ENCODE measurements at regions of chr6 and their contacts with region 1.

Region 1: DNA sequence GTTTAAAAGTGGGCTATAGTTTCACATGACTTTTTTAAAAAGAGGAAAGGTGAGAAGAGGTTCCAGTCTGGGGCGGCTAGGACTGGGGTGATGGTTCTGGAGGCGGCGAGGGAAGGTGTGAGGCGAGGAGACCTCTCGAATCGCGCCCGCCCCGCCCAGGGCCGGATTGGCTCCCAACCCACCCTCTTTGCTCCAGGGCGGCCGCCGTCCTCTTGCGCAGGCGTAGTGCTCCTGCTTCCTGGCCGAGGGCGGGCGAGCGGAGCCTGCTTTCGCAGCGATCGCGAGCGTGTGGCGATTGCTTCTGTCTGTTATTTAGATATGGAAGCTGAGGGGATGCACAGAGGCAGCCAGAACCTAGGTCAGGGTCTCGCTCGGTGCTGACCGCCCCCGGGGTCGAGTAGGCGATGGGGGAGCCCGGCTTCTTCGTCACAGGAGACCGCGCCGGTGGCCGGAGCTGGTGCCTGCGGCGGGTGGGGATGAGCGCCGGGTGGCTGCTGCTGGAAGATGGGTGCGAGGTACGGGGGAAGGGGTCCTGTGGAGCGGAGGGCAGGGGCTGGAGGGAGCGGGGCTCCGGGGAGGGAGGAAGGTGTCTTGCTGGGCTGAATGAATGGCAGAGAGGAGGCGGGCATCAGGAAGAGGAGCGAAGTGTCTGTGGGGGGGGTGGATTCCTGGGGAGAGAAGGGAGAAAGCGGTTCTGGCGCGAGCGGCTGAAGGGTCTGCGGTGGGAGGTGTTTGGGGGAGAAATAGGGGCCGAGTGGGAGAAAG is at the start of gene RNF8:
- DNase-seq: peak; percentile 73 to 83
- ATAC-seq: peak; percentile 89 to 91
- H3K4me3 ChIP-seq: peak within 1 kb of the TSS; percentile 92 to 99 (median 93)
- H3K27ac ChIP-seq: peak within 1 kb of the TSS; percentile 8 to 64 (median 48)
- H3K4me1 ChIP-seq: peaks cover 19 to 22% of the 10 kb centered on the region in 2 donors
- H3K27me3 ChIP-seq: no peaks in the 10 kb centered on the region
- CTCF ChIP-seq: no peak
- POLR2A ChIP-seq: no peak
- total RNA-seq, gene RNF8: 6.9 to 17.8 (median 11.9) TPM

Region 2: DNA sequence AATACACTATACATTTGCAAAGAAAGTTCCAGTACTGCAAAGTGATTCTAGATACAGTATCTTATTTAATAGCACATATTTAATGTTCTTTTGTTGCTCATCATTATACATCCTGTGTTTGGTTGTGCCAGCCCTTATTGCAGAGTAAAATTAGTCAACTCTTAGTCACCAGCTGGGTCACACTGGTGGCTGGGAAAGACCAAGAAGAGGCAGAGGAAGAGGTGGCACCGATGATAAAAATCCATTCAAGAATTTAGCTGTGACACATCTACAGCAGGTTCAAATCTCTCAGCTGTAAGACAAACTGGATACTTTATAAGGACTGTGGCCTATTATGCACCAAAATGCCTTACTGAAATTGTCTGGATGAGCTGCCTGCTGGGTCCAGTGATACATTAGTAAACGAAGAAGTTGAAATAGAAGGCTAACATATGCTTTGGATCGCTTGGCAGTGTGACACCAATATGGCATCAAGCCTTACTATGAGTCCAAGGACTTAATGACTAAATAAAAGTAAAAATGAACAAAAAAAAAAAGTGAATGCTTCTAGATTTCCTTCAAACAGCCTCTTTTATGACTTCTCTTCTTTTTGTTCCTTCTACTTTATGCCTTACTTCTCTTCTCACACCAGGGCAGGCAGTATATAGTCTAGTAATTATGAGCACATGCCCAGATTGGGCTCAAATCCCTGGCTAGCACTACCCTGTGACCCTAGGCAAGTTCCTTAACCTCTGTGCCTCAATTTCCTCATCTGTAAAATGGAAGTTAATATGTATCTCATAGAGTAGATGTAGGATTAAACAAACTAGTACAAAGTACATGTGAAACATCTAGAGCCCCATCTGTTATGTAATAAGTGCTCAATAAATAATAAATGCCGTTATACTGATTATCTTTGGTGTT is 29.6 kb before region 1 on chr6:
- in situ Hi-C with region 1: no loop called
- intact Hi-C with region 1: loop called (anchors 1 kb)
- DNase-seq: no peak
- ATAC-seq: no peak
- H3K4me3 ChIP-seq: no peak overlapping the region
- H3K27ac ChIP-seq: no peak overlapping the region
- H3K4me1 ChIP-seq: no peaks in the 10 kb centered on the region
- H3K27me3 ChIP-seq: no peaks in the 10 kb centered on the region
- CTCF ChIP-seq: no peak
- POLR2A ChIP-seq: no peak

Region 3: GRCh38 chr6:37432916-37433656 is 79.1 kb after region 1 on chr6 and contains the start of gene CMTR1:
- in situ Hi-C with region 1: no loop called
- intact Hi-C with region 1: loop called (anchors 5 kb)
- DNase-seq: peak; percentile 85 to 89
- ATAC-seq: peak; percentile 93 to 95
- H3K4me3 ChIP-seq: peak within 1 kb of the TSS; percentile 84 to 99 (median 95)
- H3K27ac ChIP-seq: peak within 1 kb of the TSS; percentile 82 to 97 (median 90)
- H3K4me1 ChIP-seq: peaks cover 14 to 20% of the 10 kb centered on the region in 2 donors
- H3K27me3 ChIP-seq: no peaks in the 10 kb centered on the region
- CTCF ChIP-seq: peak in 2 of 5 experiments; percentile 36 to 39
- POLR2A ChIP-seq: peak; percentile 50 to 56
- total RNA-seq, gene CMTR1: 18.2 to 34.6 (median 25.4) TPM

Measured in gastrocnemius medialis (tissue), 4 donors.